Left ventricle myocardium superior (tissue), 1 donor: ENCODE measurements at regions of chr3 and their contacts with region 1.

Region 1: DNA sequence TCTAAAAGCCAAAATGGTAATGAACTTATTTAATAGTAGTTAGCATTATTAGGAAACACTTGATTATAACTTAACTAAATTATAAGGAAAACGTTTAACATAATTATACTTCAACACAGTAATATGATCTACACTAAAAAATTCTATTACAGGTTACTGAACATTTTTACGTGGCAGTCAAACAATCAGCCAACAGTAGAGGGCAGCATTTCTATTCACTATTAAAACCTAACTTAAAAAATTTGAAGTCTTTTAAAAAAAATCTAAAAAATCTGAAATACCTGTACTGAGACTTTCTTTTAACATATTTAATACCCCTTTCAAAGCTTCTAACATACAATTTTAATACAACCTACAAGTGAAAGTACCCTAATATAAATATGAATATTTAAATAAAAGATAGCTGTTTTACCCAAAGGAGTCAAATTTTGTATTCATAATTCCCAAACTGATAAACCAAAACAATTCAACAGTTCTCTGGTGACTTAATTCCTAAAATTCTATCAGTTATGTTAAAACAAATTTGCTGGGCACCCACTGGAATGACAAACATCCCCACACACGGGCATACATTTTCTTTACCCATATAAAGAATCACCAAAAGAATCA is 41.5 kb downstream of the DLG1 start:
- DNase-seq: no peak
- ATAC-seq: no peak

Region 2: GRCh38 chr3:197456261-197457091 is 199.5 kb after region 1 on chr3:
- intact Hi-C with region 1: loop called (anchors 10 kb)
- DNase-seq: peak; percentile 90
- ATAC-seq: peak; percentile 93